Caco-2 (cell line): ENCODE measurements at regions of chr6 and their contacts with region 1.

Region 1: GRCh38 chr6:117188627-117189201 is 76.6 kb upstream of the VGLL2 start:
- DNase-seq: peak in 1 of 2 experiments; percentile 6
- H3K4me3 ChIP-seq: no peak overlapping the region
- H3K4me3 Mint-ChIP-seq: no peak overlapping the region
- H3K27ac Mint-ChIP-seq: no peak overlapping the region
- H3K4me1 ChIP-seq: no peaks in the 10 kb centered on the region
- H3K4me1 Mint-ChIP-seq: no peaks in the 10 kb centered on the region
- H3K27me3 ChIP-seq: no peaks in the 10 kb centered on the region
- H3K27me3 Mint-ChIP-seq: no peaks in the 10 kb centered on the region
- CTCF ChIP-seq: peak; percentile 50 to 60

Region 2: DNA sequence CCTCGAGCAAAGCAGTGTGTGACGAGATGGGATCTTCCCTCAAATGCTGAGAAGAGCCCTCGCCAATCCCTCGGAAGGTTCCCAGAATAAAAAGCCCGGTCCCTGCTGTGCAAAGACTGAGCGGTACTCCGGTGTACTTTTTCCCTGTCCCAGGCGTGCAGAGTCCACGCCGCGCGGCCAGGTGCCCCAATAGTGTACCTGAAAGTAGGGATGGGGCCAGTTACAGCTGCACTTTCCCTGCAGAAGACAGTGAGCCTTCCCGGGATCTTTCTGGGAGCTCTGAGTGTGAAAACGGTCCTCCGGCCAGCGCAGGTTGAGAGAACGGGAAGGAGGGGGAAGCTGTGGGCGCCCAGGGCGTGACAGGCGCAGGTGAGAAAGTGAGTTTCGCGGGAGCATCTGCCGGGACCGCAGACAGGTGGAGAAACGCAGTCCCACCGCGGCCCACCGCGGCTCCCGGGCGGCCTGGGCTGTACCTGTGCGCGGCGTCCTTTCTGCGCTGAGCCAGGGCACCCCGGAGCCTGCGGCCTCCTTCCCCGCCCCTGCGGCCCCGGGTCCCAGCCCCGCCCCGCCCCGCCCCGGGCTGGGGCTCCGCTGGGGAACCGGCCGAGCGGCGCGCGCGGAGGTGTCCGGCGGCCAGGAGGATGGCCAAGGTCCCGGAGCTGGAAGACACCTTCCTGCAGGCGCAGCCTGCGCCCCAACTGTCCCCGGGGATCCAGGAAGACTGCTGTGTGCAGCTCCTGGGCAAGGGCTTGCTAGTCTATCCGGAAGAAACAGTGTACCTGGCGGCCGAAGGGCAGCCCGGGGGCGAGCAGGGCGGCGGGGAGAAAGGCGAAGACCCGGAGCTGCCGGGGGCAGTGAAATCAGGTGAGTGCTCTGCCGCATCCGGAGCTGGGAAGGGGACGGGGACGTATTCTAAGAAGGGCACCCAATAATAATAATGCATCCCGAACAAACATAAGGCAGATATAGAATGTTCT is 311.8 kb before region 1 on chr6 and contains the start of gene RFX6:
- CTCF ChIA-PET with region 1: no interaction called
- POLR2A ChIA-PET with region 1: no interaction called
- intact Hi-C with region 1: loop called (anchors 1 kb)
- DNase-seq: peak; percentile 38 to 51
- H3K4me3 ChIP-seq: peak within 1 kb of the TSS; percentile 53
- H3K4me3 Mint-ChIP-seq: peak within 1 kb of the TSS; percentile 88
- H3K27ac Mint-ChIP-seq: no peak within 1 kb of the TSS
- H3K4me1 ChIP-seq: peaks cover 4% of the 10 kb centered on the region; the same call in 1 of the 2 replicates
- H3K4me1 Mint-ChIP-seq: no peaks in the 10 kb centered on the region
- H3K27me3 ChIP-seq: peaks cover 1% of the 10 kb centered on the region
- H3K27me3 Mint-ChIP-seq: peaks cover 3% of the 10 kb centered on the region
- CTCF ChIP-seq: no peak
- total RNA-seq, gene RFX6: 1.3 and 1.5 TPM in 2 replicates

Region 3: GRCh38 chr6:117206947-117207687 is 18.4 kb after region 1 on chr6:
- CTCF ChIA-PET with region 1: no interaction called
- POLR2A ChIA-PET with region 1: no interaction called
- intact Hi-C with region 1: no loop called
- DNase-seq: peak in 1 of 2 experiments; percentile 31
- H3K4me3 ChIP-seq: no peak overlapping the region
- H3K4me3 Mint-ChIP-seq: no peak overlapping the region
- H3K27ac Mint-ChIP-seq: no peak overlapping the region
- H3K4me1 ChIP-seq: no peaks in the 10 kb centered on the region
- H3K4me1 Mint-ChIP-seq: no peaks in the 10 kb centered on the region
- H3K27me3 ChIP-seq: no peaks in the 10 kb centered on the region; the same call in 1 of the 2 replicates
- H3K27me3 Mint-ChIP-seq: no peaks in the 10 kb centered on the region
- CTCF ChIP-seq: no peak